Esophagus muscularis mucosa (tissue), 4 donors: ENCODE measurements at regions of chr15 and their contacts with region 1.

Region 1: GRCh38 chr15:66946578-66947164 is 118.7 kb upstream of the SMAD3 start:
- DNase-seq: no peak
- H3K4me3 ChIP-seq: no peak overlapping the region
- H3K27ac ChIP-seq: no peak overlapping the region
- H3K4me1 ChIP-seq: peaks cover 0 to 10% (median 2%) of the 10 kb centered on the region in 4 donors
- H3K27me3 ChIP-seq: no peaks in the 10 kb centered on the region
- CTCF ChIP-seq: peak; percentile 94 to 96 (median 95)
- EP300 ChIP-seq: no peak
- POLR2A ChIP-seq: no peak

Region 2: GRCh38 chr15:67165254-67166253 is 218.9 kb after region 1 on chr15:
- intact Hi-C with region 1: loop called (anchors 10 kb)
- DNase-seq: no peak
- H3K4me3 ChIP-seq: no peak overlapping the region
- H3K27ac ChIP-seq: peak overlapping the region in 2 of 4 donors; percentile 6 to 42
- H3K4me1 ChIP-seq: peaks cover 22 to 64% (median 56%) of the 10 kb centered on the region in 4 donors
- H3K27me3 ChIP-seq: no peaks in the 10 kb centered on the region
- CTCF ChIP-seq: no peak
- EP300 ChIP-seq: no peak
- POLR2A ChIP-seq: no peak

Region 3: DNA sequence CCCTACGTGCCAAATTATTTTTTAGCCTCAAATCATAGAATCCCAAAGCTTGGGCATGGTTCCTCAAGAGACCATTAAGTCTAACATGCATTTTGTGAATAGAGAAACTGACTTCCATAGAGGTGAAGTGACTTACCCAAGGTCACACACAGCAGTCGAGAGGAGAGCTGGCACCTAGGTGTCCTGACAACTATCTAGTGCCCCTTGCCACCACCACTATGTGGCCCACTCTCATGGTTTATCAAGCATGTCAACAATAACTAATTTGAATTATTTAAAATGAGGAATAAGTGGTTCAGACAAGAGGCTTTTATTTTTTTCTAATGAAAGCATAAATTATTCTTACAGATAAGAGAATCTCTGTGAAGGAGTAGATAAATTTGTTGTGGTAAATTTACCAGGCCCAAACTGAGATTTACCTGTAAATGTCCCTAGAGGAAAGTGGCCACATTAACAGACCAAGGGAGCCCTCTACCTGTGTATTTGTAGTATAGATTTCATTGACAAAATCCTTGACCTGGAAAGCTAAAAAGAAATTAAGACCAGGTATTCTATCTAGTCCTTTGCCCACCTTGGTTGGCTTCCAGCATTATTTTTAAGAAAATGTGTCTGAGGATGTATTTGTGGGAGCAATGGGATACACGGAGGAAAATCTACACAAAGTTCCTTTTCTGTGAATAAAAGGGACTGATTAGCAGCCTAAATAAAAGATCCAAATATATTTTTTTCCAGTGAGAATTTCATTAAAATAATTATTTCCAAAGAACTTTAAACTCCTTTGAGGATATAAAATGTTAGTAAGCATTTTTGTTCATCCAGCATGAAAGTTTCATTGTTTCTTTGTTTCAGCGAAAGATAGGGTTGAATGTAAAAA is 357.1 kb after region 1 on chr15:
- intact Hi-C with region 1: loop called (anchors 2 kb)
- DNase-seq: no peak
- H3K4me3 ChIP-seq: no peak overlapping the region
- H3K27ac ChIP-seq: no peak overlapping the region
- H3K4me1 ChIP-seq: peaks cover 0 to 14% (median 12%) of the 10 kb centered on the region in 4 donors
- H3K27me3 ChIP-seq: no peaks in the 10 kb centered on the region
- CTCF ChIP-seq: peak; percentile 43 to 57 (median 51)
- EP300 ChIP-seq: no peak
- POLR2A ChIP-seq: no peak

Region 4: DNA sequence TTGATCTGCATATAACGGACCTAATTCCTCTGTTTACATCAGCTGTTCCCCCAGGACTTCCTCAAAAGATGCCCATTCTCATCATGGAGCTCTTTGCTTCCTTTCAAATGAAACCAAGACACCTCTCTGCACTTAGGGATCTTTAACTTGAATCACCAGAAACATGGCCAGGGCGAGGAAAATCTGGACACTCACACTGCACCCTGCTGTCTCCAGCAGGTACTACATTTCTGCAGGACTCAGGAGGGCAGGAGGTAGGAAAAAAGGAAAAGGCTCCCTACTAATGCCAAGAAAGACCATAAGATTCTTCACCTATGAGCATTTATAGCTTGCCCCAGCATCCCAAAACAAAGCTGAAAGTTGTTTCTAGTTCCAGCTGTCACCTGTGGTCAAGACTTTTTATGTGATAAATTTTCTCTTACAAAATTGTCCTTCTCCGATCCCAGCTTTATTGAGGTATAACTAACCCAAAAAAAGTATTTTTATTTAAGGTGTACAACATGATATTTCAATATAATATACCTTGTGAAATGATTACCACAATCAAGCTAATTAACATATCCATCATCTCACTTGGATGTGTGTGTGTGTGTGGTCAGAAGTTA is 486.9 kb after region 1 on chr15:
- intact Hi-C with region 1: loop called (anchors 2 kb)
- DNase-seq: no peak
- H3K4me3 ChIP-seq: no peak overlapping the region
- H3K27ac ChIP-seq: no peak overlapping the region
- H3K4me1 ChIP-seq: no peaks in the 10 kb centered on the region
- H3K27me3 ChIP-seq: no peaks in the 10 kb centered on the region
- CTCF ChIP-seq: peak; percentile 72 to 85 (median 72)
- EP300 ChIP-seq: no peak
- POLR2A ChIP-seq: no peak

Region 5: GRCh38 chr15:67839929-67840748 is 893.5 kb after region 1 on chr15 and contains the start of gene RNU6-1:
- intact Hi-C with region 1: loop called (anchors 10 kb)
- DNase-seq: peak; percentile 98
- H3K4me3 ChIP-seq: peak within 1 kb of the TSS; percentile 75 to 92 (median 83)
- H3K27ac ChIP-seq: peak within 1 kb of the TSS; percentile 95 to 99 (median 97)
- H3K4me1 ChIP-seq: peaks cover 26 to 50% (median 46%) of the 10 kb centered on the region in 4 donors
- H3K27me3 ChIP-seq: peaks cover 0 to 11% (median 11%) of the 10 kb centered on the region in 4 donors
- CTCF ChIP-seq: no peak
- EP300 ChIP-seq: no peak
- POLR2A ChIP-seq: peak; percentile 63
- total RNA-seq, gene RNU6-1: not detected